ENCODE measurements at regions of chr19 and their contacts with region 1.

Region 1: GRCh38 chr19:3035542-3036118 is 6.5 kb upstream of the TLE2 start:
- DNase-seq: peak; percentile 94 to 97 (median 95)
- H3K4me3 ChIP-seq: peak overlapping the region; percentile 77 to 93
- H3K4me3 Mint-ChIP-seq: peak overlapping the region; percentile 90 to 96 (median 93)
- H3K27ac ChIP-seq: peak overlapping the region; percentile 75
- H3K27ac Mint-ChIP-seq: peak overlapping the region; percentile 95 to 99 (median 98)
- H3K4me1 ChIP-seq: peaks cover 19% of the 10 kb centered on the region
- H3K4me1 Mint-ChIP-seq: peaks cover 18 to 42% (median 28%) of the 10 kb centered on the region in 4 donors
- H3K27me3 ChIP-seq: no peaks in the 10 kb centered on the region
- H3K27me3 Mint-ChIP-seq: peaks cover 0 to 3% of the 10 kb centered on the region in 2 donors

Region 2: GRCh38 chr19:2900296-2901252 is 135.1 kb before region 1 on chr19 and contains the start of gene ZNF57:
- CTCF ChIA-PET with region 1: no interaction called
- POLR2A ChIA-PET with region 1: no interaction called
- intact Hi-C with region 1: no loop called
- DNase-seq: peak; percentile 92 to 98 (median 97)
- H3K4me3 ChIP-seq: peak within 1 kb of the TSS; percentile 52 to 90
- H3K4me3 Mint-ChIP-seq: peak within 1 kb of the TSS; percentile 93 to 100 (median 96)
- H3K27ac ChIP-seq: peak within 1 kb of the TSS; percentile 47
- H3K27ac Mint-ChIP-seq: peak within 1 kb of the TSS; percentile 81 to 94 (median 92)
- H3K4me1 ChIP-seq: peaks cover 15% of the 10 kb centered on the region
- H3K4me1 Mint-ChIP-seq: peaks cover 15 to 29% (median 20%) of the 10 kb centered on the region in 4 donors
- H3K27me3 ChIP-seq: no peaks in the 10 kb centered on the region
- H3K27me3 Mint-ChIP-seq: no peaks in the 10 kb centered on the region
- total RNA-seq, gene ZNF57: 4.2 to 4.7 TPM

Region 3: GRCh38 chr19:2944775-2945574 is 90.7 kb before region 1 on chr19 and contains the start of gene ZNF77:
- CTCF ChIA-PET with region 1: no interaction called
- POLR2A ChIA-PET with region 1: interaction called, 17 read pairs
- intact Hi-C with region 1: loop called (anchors 1 kb)
- DNase-seq: peak; percentile 98 to 99 (median 99)
- H3K4me3 ChIP-seq: peak within 1 kb of the TSS; percentile 81 to 84
- H3K4me3 Mint-ChIP-seq: peak within 1 kb of the TSS; percentile 95 to 98 (median 97)
- H3K27ac ChIP-seq: peak within 1 kb of the TSS; percentile 64
- H3K27ac Mint-ChIP-seq: peak within 1 kb of the TSS; percentile 94 to 99 (median 99)
- H3K4me1 ChIP-seq: peaks cover 27% of the 10 kb centered on the region
- H3K4me1 Mint-ChIP-seq: peaks cover 17 to 45% (median 27%) of the 10 kb centered on the region in 4 donors
- H3K27me3 ChIP-seq: no peaks in the 10 kb centered on the region
- H3K27me3 Mint-ChIP-seq: no peaks in the 10 kb centered on the region
- total RNA-seq, gene ZNF77: 5.8 to 6.4 TPM

Region 4: GRCh38 chr19:3047425-3048189 is 12.0 kb after region 1 on chr19:
- CTCF ChIA-PET with region 1: interaction called, 7 read pairs
- POLR2A ChIA-PET with region 1: interaction called, 555 read pairs
- intact Hi-C with region 1: no loop called
- DNase-seq: peak; percentile 66 to 83 (median 67)
- H3K4me3 ChIP-seq: peak overlapping the region; percentile 17 to 40
- H3K4me3 Mint-ChIP-seq: peak overlapping the region; percentile 91 to 98 (median 94)
- H3K27ac ChIP-seq: peak overlapping the region; percentile 21
- H3K27ac Mint-ChIP-seq: peak overlapping the region; percentile 84 to 95 (median 94)
- H3K4me1 ChIP-seq: peaks cover 14% of the 10 kb centered on the region
- H3K4me1 Mint-ChIP-seq: peaks cover 10 to 23% (median 14%) of the 10 kb centered on the region in 4 donors
- H3K27me3 ChIP-seq: no peaks in the 10 kb centered on the region
- H3K27me3 Mint-ChIP-seq: no peaks in the 10 kb centered on the region

Region 5: DNA sequence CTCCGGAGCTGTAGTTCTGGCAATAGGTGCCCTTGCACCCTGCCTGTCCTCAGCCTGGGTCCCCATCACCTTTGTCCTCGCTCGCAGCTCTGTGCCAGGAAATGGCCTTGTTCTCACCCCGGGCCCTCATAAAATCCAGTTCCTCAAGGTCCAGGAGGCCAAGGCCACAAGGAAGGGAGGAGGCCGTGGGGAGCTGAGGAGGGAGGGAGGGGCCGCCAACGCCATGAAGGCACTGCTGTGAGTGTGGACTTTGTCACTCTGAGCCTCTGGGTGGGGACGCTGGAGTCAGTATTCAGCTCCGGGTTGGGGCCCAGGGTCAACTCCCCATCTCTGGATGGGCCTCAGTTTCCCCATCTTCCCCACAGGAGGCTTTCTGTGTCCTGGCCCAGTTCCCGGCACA is 49.3 kb after region 1 on chr19:
- CTCF ChIA-PET with region 1: no interaction called
- POLR2A ChIA-PET with region 1: no interaction called
- intact Hi-C with region 1: no loop called
- DNase-seq: no peak
- H3K4me3 ChIP-seq: no peak overlapping the region
- H3K4me3 Mint-ChIP-seq: no peak overlapping the region
- H3K27ac ChIP-seq: no peak overlapping the region
- H3K27ac Mint-ChIP-seq: no peak overlapping the region
- H3K4me1 ChIP-seq: no peaks in the 10 kb centered on the region
- H3K4me1 Mint-ChIP-seq: no peaks in the 10 kb centered on the region
- H3K27me3 ChIP-seq: no peaks in the 10 kb centered on the region
- H3K27me3 Mint-ChIP-seq: no peaks in the 10 kb centered on the region

Region 6: GRCh38 chr19:3100081-3100864 is 64.6 kb after region 1 on chr19:
- CTCF ChIA-PET with region 1: interaction called, 14 read pairs
- POLR2A ChIA-PET with region 1: interaction called, 10 read pairs
- intact Hi-C with region 1: loop called (anchors 5 kb)
- DNase-seq: no peak
- H3K4me3 ChIP-seq: no peak overlapping the region
- H3K4me3 Mint-ChIP-seq: peak overlapping the region in 2 of 8 donors; percentile 20 to 86
- H3K27ac ChIP-seq: no peak overlapping the region
- H3K27ac Mint-ChIP-seq: no peak overlapping the region
- H3K4me1 ChIP-seq: peaks cover 37% of the 10 kb centered on the region
- H3K4me1 Mint-ChIP-seq: peaks cover 16 to 34% (median 25%) of the 10 kb centered on the region in 4 donors
- H3K27me3 ChIP-seq: peaks cover 3% of the 10 kb centered on the region
- H3K27me3 Mint-ChIP-seq: peaks cover 5 to 17% of the 10 kb centered on the region in 2 donors

Region 7: GRCh38 chr19:3185482-3186376 is 150.1 kb after region 1 on chr19 and contains the start of gene NCLN:
- CTCF ChIA-PET with region 1: no interaction called
- POLR2A ChIA-PET with region 1: interaction called, 14 read pairs
- intact Hi-C with region 1: loop called (anchors 5 kb)
- DNase-seq: peak; percentile 95 to 98 (median 95)
- H3K4me3 ChIP-seq: peak within 1 kb of the TSS; percentile 78 to 88
- H3K4me3 Mint-ChIP-seq: peak within 1 kb of the TSS; percentile 87 to 97 (median 93)
- H3K27ac ChIP-seq: peak within 1 kb of the TSS; percentile 45
- H3K27ac Mint-ChIP-seq: peak within 1 kb of the TSS; percentile 93 to 97 (median 96)
- H3K4me1 ChIP-seq: peaks cover 70% of the 10 kb centered on the region
- H3K4me1 Mint-ChIP-seq: peaks cover 33 to 67% (median 50%) of the 10 kb centered on the region in 4 donors
- H3K27me3 ChIP-seq: no peaks in the 10 kb centered on the region
- H3K27me3 Mint-ChIP-seq: no peaks in the 10 kb centered on the region
- total RNA-seq, gene NCLN: 53.0 to 59.3 TPM